Motor neuron (in vitro differentiated cells): ENCODE measurements at regions of chr6 and their contacts with region 1.

Region 1: GRCh38 chr6:118283766-118284165 is 264.3 kb upstream of the PLN start:
- ATAC-seq: peak in 3 of 8 experiments; percentile 46 to 79 (median 60)
- H3K4me3 ChIP-seq: no peak overlapping the region
- H3K27ac ChIP-seq: no peak overlapping the region
- H3K4me1 ChIP-seq: peaks cover 0 to 2% of the 10 kb centered on the region in 2 donors

Region 2: GRCh38 chr6:118509009-118509617 is 225.3 kb after region 1 on chr6:
- in situ Hi-C with region 1: loop called in 2 of 9 experiments (anchors 25 kb)
- ATAC-seq: no peak
- H3K4me3 ChIP-seq: no peak overlapping the region
- H3K27ac ChIP-seq: no peak overlapping the region
- H3K4me1 ChIP-seq: no peaks in the 10 kb centered on the region

Region 3: GRCh38 chr6:118542184-118542952 is 258.6 kb after region 1 on chr6:
- in situ Hi-C with region 1: loop called in 1 of 9 experiments (anchors 25 kb)
- ATAC-seq: no peak
- H3K4me3 ChIP-seq: no peak overlapping the region
- H3K27ac ChIP-seq: no peak overlapping the region
- H3K4me1 ChIP-seq: no peaks in the 10 kb centered on the region

Region 4: DNA sequence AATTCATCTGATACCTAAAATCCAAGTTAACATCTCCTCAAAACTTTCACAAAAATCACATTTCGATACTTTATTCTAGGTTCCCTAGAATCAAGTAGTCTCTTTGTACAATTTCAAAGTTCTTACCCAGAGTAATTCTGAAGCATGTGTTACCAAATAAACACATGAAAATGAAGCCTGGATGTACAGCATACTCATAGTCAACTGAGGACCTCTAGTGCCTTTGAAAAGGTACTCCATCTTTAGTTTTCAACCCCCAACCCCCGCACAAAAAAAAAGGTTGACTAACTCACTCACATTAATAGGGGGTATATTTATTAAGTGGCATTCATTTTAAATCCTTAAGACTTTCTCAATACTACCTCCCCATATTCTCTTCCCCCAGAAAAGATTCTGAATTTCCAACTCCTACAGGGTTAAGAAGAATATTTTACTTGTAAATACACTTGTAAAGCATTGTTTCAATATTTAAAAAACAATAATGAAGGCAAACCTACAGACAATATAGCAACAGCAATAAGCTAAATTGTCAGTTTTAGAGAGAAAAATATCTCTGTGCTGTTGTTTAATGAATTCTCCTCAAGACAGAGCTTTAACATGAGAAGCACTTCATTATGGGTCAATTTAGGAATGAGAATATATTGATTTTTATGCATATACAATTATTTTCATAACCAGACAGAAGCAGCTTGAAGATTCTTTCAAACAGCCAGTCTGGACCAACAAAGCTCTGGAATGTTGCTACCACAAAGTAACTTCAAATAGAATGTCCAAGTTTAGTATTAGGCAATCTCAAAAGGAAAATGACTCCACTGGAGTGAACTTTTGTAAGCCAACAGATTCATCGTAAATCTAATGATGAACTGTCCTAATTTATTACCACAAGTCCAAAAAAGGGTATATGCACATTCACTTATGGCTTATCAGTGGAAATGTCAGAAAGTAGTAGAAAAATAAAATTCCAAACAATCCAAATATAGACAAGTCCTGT is 267.6 kb after region 1 on chr6:
- in situ Hi-C with region 1: loop called in 2 of 9 experiments (anchors 25 kb)
- ATAC-seq: peak in 7 of 8 experiments; percentile 36 to 86 (median 67)
- H3K4me3 ChIP-seq: no peak overlapping the region
- H3K27ac ChIP-seq: no peak overlapping the region
- H3K4me1 ChIP-seq: no peaks in the 10 kb centered on the region

Region 5: DNA sequence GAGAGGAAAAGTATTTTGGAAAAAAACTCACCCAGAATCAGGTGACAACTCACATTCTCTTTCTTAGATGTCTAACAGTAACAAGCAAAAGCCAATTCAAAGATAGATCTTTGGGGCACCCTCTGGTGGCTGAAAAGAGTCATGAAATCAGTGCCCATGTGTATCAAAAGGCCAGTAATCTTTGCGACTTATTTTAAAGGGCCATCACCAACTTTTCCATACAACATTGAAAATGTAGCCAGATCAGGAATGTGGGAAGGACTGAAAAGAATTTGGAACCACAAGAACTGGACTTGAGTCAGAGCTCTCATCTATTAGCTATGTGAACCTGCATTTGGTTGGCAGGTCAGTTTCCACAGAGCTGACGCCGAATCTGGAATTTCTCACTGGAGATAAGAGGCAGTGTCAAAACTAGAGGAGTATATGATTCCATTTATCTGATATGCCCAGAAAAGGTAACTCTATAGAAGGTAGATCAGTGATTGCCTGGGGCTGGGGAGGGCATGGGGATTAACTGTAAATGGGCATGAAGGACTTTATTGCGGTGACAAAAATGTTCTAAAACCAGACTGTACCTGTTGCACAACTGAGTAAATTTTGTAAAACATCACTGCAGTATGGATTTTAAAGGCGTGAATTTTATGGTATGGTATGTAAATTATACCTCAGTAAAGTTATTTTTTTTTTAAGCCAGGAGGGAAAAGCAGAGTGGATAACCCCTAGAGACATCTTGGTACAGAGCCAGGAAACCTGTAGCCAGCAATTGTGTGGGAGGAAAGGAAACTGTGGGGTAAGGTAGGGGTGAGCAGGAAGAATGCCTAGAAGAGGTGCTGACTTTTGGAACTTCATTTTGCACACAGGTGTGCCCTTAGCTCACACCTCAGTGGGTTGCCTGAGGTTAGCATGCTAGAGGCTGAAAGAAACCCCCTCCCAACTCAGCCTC is 493.1 kb after region 1 on chr6:
- in situ Hi-C with region 1: loop called in 3 of 9 experiments (anchors 25 kb)
- ATAC-seq: peak; percentile 47 to 96 (median 72)
- H3K4me3 ChIP-seq: no peak overlapping the region
- H3K27ac ChIP-seq: no peak overlapping the region
- H3K4me1 ChIP-seq: no peaks in the 10 kb centered on the region